ENCODE measurements at regions of chr6 and their contacts with region 1.

Region 1: DNA sequence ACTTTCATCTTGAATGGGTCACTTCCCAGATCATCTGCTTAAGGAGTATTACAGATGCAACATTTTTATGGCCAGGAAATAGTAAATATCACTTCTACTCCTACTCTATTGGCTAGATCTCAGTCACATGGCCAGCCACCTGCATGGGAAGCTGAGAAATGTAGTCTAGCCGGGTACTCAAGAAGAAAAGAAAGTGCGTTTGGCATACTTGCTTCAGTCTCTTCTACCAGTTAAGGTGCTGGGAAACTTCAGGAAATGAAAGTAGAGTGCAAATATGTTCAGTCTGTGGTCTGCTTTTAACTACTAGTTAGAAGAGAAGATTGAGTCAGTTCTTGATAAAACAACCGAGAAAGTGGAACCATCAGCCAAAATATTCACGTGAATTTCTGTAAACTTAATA is 129.2 kb downstream of the PDSS2 start:
- DNase-seq: no peak
- H3K4me3 ChIP-seq: no peak overlapping the region
- H3K27me3 ChIP-seq: no peaks in the 10 kb centered on the region
- CTCF ChIP-seq: no peak

Region 2: DNA sequence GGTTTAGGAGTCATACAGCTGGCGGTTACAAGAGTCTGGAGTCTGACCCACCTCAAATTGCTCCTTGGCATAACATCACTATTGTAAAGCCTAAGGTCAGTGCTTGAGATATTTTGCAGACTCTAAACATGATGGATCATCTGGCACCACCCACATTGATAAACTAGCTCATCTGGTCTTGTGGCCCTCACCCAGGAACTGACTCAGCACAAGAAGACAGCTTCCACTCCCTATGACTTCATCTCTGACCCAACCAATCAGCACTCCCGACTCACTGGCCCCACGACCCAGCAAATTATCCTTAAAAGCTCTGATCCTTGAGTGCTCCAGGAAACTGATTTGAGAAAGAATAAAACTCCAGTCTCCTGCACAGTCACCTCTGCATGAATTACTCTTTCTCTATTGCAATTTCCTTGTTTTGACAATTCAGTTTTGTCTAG is 471.5 kb before region 1 on chr6:
- CTCF ChIA-PET with region 1: no interaction called
- POLR2A ChIA-PET with region 1: no interaction called
- DNase-seq: peak; percentile 9
- H3K4me3 ChIP-seq: no peak overlapping the region
- H3K27me3 ChIP-seq: no peaks in the 10 kb centered on the region
- CTCF ChIP-seq: no peak

Region 3: DNA sequence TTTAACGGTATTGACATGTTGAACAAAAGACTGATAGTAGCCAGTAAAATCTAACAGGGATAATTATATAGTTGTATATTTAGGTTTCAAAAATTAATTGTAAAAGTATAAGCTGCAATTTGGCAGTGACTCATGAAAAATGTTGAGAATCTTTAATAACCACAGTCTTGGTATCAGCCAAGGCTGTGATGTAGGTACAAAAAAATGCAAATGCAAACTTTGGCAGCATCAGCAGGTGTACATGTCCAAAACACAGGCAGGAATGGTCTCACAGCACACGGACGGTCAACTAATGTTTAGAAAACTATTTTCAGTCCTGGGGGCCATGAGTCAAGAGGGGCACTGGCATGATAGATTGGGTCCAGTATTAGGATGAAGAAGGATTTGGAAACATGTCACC is 156.4 kb before region 1 on chr6:
- CTCF ChIA-PET with region 1: no interaction called
- POLR2A ChIA-PET with region 1: no interaction called
- DNase-seq: no peak
- H3K4me3 ChIP-seq: no peak overlapping the region
- H3K27me3 ChIP-seq: no peaks in the 10 kb centered on the region
- CTCF ChIP-seq: no peak

Region 4: DNA sequence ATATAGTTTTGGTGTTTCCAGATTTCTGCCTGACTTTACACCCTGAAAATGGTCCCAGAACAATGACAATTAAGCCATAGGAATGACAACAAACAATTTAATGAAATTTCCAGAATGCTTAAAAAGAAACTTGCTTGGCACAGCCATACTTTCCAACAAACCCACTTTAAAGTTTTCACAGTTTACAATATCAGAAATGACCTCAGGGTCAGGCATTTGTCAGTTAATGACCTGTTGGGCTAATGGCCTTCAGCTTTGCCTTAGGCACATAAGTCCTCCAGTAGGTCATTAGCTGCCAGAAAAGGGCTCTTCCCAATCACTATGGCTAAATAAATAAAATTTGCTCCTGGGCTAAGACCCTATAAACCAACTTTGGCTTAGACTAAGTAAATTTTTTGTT is 70.2 kb before region 1 on chr6:
- CTCF ChIA-PET with region 1: no interaction called
- POLR2A ChIA-PET with region 1: interaction called, 10 read pairs
- DNase-seq: no peak
- H3K4me3 ChIP-seq: no peak overlapping the region
- H3K27me3 ChIP-seq: no peaks in the 10 kb centered on the region
- CTCF ChIP-seq: no peak

Region 5: DNA sequence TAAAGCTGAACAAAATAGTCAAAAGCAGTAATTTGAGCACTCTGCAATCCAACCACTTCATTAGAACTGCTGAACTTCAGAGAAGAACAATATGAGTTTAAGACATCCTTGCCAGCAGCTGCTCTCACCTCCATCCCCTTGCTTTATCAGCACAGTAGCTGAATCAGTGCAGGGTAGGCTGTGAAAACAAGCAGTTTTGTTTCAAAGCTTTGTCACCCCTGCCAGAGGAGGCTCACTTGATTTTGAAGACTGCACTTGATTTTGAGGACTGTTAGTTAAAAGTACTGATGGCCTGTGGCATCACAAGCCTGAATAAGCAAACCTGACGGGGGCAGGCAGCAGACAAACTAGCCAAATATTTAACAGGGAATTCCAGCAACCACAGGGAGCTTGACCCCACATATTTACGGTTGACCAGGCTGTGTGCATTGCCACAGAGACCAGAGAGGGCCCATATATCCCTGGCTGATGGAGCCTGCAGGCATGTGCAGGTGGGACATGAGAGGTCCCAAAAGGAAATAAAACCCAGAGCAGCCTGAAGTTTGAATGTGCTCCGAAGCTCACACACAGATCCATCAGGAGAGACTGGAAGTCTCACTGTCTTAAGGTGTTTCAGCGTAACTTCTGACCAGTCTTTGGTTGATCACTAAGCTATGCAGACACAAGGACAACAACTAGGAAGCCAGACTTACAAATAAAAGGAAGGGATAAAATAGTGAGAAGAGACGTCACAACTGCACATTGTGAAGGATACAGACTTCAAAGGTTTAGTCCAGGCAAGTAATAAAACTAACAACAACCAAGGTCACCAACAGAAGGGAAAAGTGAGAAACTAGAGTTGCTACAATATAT is 31.8 kb after region 1 on chr6:
- CTCF ChIA-PET with region 1: no interaction called
- POLR2A ChIA-PET with region 1: no interaction called
- DNase-seq: peak; percentile 28
- H3K4me3 ChIP-seq: no peak overlapping the region
- H3K27me3 ChIP-seq: no peaks in the 10 kb centered on the region
- CTCF ChIP-seq: no peak